ENCODE measurements at regions of chr1 and their contacts with region 1.

Region 1: DNA sequence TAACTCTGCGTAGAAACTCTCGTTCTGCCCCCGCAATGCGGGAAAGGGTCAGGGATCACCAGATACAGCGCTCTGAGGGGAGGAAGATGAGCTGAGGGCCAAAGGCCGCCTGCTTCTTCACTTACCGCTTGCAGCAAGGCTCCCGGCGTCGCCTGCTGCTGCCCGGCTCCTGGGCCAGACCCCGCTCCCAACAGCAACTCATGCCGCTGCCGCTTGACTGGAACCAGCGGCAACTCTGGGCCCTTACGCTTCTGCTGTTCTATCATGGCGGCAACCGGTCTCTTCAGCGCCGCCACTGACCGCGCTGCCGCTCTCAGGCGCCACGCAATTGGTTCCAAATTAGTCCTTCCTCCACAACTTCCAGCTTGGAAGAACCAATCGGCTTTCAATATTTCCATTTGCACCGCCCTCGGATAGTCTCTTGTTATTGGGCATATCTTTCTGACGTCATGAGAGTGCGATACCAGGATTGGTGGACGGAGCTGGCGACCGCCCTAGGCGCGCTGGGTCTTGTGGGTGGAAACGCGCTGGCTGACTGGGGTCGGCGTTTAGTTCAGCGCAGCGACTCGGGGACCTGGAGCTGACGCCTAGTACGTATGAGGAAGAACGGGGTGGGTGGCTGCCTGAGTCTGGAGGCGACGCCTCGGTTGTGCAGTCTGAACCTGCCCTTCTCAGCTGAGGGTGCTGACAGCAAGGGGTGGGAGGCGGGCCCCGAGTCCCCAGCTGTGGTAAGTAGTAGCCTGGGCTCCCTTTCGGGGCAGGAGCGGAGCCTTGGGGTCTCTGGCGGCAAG is at the starts of genes SNRNP40 and ZCCHC17:
- DNase-seq: peak; percentile 99
- H3K4me3 Mint-ChIP-seq: no peak within 1 kb of the TSS
- H3K27ac Mint-ChIP-seq: no peak within 1 kb of the TSS
- H3K4me1 Mint-ChIP-seq: peaks cover 28% of the 10 kb centered on the region
- H3K27me3 Mint-ChIP-seq: no peaks in the 10 kb centered on the region
- CTCF ChIP-seq: no peak
- total RNA-seq, gene SNRNP40: 65.4 and 72.8 TPM in 2 replicates
- total RNA-seq, gene ZCCHC17: 29.3 and 40.0 TPM in 2 replicates

Region 2: GRCh38 chr1:31155216-31155841 is 141.4 kb before region 1 on chr1:
- CTCF ChIA-PET with region 1: interaction called, 3 read pairs
- POLR2A ChIA-PET with region 1: interaction called, 12 read pairs
- intact Hi-C with region 1: no loop called
- DNase-seq: peak; percentile 72
- H3K4me3 Mint-ChIP-seq: peak overlapping the region; percentile 82
- H3K27ac Mint-ChIP-seq: peak overlapping the region; percentile 95
- H3K4me1 Mint-ChIP-seq: peaks cover 20% of the 10 kb centered on the region
- H3K27me3 Mint-ChIP-seq: no peaks in the 10 kb centered on the region
- CTCF ChIP-seq: peak; percentile 36

Region 3: GRCh38 chr1:31272369-31272768 is 24.3 kb before region 1 on chr1:
- CTCF ChIA-PET with region 1: no interaction called
- POLR2A ChIA-PET with region 1: interaction called, 15 read pairs
- intact Hi-C with region 1: no loop called
- DNase-seq: no peak
- H3K4me3 Mint-ChIP-seq: no peak overlapping the region
- H3K27ac Mint-ChIP-seq: no peak overlapping the region
- H3K4me1 Mint-ChIP-seq: peaks cover 7% of the 10 kb centered on the region
- H3K27me3 Mint-ChIP-seq: no peaks in the 10 kb centered on the region
- CTCF ChIP-seq: no peak

Region 4: DNA sequence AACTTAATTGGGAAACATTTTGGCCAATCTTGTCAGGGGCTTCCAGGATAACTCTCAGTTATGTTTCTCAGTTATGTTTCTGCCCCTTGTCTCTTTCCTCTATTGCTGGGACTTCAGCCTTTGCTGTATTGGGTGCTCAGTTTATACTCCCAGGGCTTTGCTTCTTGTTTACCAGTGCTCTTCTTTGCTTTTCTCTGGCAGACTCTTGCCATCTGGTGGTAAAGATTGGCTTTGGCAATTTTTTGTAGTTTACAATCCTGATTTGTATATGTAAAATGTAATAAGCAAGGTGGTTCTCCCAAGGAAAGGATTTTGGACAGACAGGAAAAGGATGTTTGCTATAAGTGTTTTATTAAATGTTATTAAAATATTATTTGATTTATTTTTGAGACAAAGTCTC is 38.3 kb after region 1 on chr1:
- CTCF ChIA-PET with region 1: no interaction called
- POLR2A ChIA-PET with region 1: interaction called, 4 read pairs
- intact Hi-C with region 1: loop called (anchors 2 kb)
- DNase-seq: peak; percentile 51
- H3K4me3 Mint-ChIP-seq: no peak overlapping the region
- H3K27ac Mint-ChIP-seq: no peak overlapping the region
- H3K4me1 Mint-ChIP-seq: no peaks in the 10 kb centered on the region
- H3K27me3 Mint-ChIP-seq: no peaks in the 10 kb centered on the region
- CTCF ChIP-seq: peak; percentile 57

Measured in MCF 10A (cell line).